Prostate gland (tissue), 2 donors: ENCODE measurements at regions of chr5 and their contacts with region 1.

Region 1: DNA sequence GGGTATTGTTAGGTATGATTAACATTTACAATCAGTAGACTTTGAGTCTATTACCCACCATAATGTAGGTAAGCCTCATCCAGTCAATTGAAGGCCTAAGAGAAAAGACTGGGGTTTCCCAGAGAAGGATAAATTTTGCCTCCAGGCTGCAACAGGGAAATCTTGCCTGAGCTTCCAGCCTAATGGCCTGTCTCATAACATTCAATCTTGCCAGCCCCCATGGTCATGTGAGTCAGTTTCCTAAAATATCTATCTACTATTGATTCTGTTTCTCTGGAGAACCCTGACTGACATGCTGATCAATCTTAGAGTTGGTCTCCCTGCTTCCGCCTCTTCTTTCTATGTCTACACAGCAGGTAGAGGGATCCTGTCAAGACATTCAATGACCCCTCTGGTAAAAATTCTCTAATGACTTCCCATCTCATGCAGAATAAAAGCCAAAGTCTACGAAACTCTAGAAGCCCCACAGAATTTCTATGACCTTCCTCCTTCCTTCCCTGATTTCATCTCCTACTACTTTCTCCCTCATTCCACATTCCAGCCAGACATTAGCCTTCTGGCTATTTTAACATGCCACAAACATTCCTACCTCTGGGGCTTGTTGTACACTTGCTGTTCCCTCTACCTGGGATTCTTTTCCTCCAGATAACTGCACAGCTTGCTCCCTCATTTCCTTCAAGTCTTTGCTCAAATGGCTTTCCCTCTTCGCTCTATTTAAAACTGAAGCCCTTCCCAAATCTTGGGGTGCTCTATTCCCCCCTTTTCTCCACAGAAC is 60.3 kb downstream of the FBXW11 start:
- DNase-seq: no peak
- H3K4me3 ChIP-seq: no peak overlapping the region
- H3K27ac ChIP-seq: no peak overlapping the region
- H3K4me1 ChIP-seq: no peaks in the 10 kb centered on the region
- H3K27me3 ChIP-seq: no peaks in the 10 kb centered on the region
- CTCF ChIP-seq: no peak
- POLR2A ChIP-seq: no peak

Region 2: DNA sequence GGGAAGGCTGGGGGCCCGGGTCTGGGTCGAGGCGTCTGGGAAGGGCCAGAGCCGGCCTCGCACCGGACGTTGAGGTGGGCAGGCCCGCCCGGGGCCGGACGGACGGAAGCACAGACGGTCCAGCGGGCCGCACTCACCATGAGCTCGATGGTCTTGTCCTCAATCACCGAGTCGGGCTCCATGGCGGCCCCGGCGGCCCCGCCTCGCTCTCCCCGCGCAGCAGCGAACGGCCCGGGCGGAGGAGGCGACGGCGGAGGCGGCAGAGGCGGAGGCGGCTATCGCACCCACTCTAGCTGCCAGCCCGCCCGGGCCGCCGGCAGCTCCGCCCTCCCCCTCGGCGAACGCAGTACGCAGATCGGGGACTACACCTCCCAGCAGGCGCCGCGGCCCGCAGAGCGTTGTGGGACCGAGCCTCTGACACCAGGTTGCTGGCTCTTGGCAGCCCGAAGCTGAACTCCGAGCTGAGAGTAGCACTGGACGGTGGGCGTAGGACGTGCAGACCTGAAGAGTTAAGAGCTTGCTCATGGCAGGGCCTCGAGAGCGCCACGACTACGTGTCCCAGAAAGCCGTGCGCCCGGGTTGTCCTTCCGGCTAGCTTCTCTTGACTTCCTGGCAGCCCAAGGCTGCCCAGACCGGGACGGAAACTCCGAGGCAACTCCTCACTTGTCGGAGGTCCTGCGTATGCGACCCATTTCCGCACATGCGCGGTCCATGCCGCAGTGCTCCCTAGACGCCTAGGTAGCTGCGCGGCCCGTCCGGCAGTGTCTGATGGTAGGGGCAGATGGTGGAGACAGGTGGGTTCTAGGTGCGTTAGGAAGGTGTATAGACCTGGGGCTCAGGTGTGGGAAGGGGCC is 60.4 kb after region 1 on chr5 and contains the start of gene FBXW11:
- intact Hi-C with region 1: loop called (anchors 10 kb)
- DNase-seq: peak; percentile 97
- H3K4me3 ChIP-seq: peak within 1 kb of the TSS; percentile 94 to 96
- H3K27ac ChIP-seq: peak within 1 kb of the TSS; percentile 97 to 98
- H3K4me1 ChIP-seq: peaks cover 16% of the 10 kb centered on the region
- H3K27me3 ChIP-seq: no peaks in the 10 kb centered on the region
- CTCF ChIP-seq: peak in 1 of 4 experiments; percentile 22
- POLR2A ChIP-seq: peak; percentile 82
- total RNA-seq, gene FBXW11: 54.7 to 61.4 TPM